ENCODE measurements at regions of chr5 and their contacts with region 1.

Region 1: DNA sequence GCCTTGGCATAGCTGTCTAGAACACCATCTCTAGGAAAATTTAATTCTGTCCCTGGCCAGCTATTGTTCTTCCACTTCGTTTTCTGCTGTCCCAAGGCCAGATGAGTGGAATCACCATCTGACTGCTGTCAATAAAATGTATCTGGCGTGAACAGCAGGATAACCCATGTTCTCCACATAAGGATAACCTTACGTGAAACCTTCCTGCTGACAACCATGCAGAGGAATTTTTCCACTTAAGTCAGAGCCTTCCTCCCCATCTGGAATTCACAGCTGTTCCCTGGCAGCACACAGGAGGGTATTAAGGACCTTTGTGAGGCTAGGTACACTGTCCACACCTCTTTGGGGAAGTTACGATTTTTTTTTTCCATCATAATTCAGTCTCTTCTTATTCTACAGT is 28.6 kb downstream of the RNF44 start:
- DNase-seq: no peak
- ATAC-seq: no peak
- H3K4me3 ChIP-seq: no peak overlapping the region
- H3K4me3 Mint-ChIP-seq: no peak overlapping the region
- H3K27ac ChIP-seq: no peak overlapping the region
- H3K27ac Mint-ChIP-seq: peak overlapping the region in 4 of 9 donors; percentile 26 to 71 (median 40)
- H3K4me1 ChIP-seq: no peaks in the 10 kb centered on the region
- H3K4me1 Mint-ChIP-seq: peaks cover 0 to 8% (median 6%) of the 10 kb centered on the region in 7 donors
- H3K27me3 ChIP-seq: no peaks in the 10 kb centered on the region
- H3K27me3 Mint-ChIP-seq: no peaks in the 10 kb centered on the region

Region 2: GRCh38 chr5:176519810-176520720 is 11.5 kb after region 1 on chr5:
- CTCF ChIA-PET with region 1: no interaction called
- POLR2A ChIA-PET with region 1: no interaction called
- intact Hi-C with region 1: loop called in 1 of 2 experiments (anchors 2 kb)
- DNase-seq: no peak
- ATAC-seq: no peak
- H3K4me3 ChIP-seq: no peak overlapping the region
- H3K4me3 Mint-ChIP-seq: peak overlapping the region in 1 of 10 donors; percentile 56
- H3K27ac ChIP-seq: no peak overlapping the region
- H3K27ac Mint-ChIP-seq: peak overlapping the region in 3 of 9 donors; percentile 11 to 62 (median 17)
- H3K4me1 ChIP-seq: peaks cover 0 to 9% of the 10 kb centered on the region in 2 donors
- H3K4me1 Mint-ChIP-seq: peaks cover 13 to 44% (median 32%) of the 10 kb centered on the region in 7 donors
- H3K27me3 ChIP-seq: no peaks in the 10 kb centered on the region
- H3K27me3 Mint-ChIP-seq: no peaks in the 10 kb centered on the region